Caco-2 (cell line): ENCODE measurements at regions of chr10 and their contacts with region 1.

Region 1: DNA sequence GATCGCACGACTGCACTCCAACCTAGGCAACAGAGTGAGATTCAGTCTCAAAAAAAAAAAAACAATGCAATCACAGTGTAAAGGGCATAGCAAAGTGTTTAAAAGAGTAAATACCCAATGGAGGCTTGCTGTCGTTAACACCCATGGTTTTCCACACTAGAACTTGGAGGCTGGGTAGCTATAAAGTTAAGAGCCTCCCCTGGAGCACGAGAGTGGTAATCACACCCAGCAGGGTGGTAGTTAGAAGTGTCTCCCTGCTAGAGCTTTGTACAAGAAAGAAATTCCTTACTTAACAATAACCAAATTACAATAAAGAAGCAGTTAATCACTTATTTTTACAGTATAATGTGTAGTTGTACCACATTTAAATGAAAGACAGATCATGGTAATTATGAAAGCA is 1078.9 kb downstream of the NRG3 start:
- DNase-seq: no peak
- H3K4me3 ChIP-seq: no peak overlapping the region
- H3K4me3 Mint-ChIP-seq: no peak overlapping the region
- H3K27ac Mint-ChIP-seq: no peak overlapping the region
- H3K4me1 ChIP-seq: peaks cover 2% of the 10 kb centered on the region
- H3K4me1 Mint-ChIP-seq: no peaks in the 10 kb centered on the region
- H3K27me3 ChIP-seq: no peaks in the 10 kb centered on the region
- H3K27me3 Mint-ChIP-seq: no peaks in the 10 kb centered on the region
- CTCF ChIP-seq: no peak

Region 2: DNA sequence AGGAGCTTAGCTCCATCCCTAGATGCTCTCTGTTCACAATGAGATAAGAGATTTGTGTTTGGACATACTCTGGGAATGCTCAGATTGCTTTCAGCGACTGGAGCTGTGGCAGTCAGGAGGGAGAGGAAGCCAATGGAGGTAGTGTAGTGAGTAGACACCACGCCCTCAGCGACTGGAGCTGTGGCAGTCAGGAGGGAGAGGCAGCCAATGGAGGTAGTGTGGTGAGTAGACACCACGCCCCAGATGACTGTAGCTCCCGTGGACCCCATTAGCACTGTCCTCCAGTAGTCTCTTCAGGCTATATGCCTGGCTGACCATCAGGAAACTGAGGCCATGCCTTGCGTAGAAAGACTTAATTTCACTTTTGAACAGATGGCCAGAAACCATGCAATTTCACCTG is 45.2 kb before region 1 on chr10:
- CTCF ChIA-PET with region 1: no interaction called
- POLR2A ChIA-PET with region 1: no interaction called
- intact Hi-C with region 1: no loop called
- DNase-seq: no peak
- H3K4me3 ChIP-seq: no peak overlapping the region
- H3K4me3 Mint-ChIP-seq: no peak overlapping the region
- H3K27ac Mint-ChIP-seq: no peak overlapping the region
- H3K4me1 ChIP-seq: no peaks in the 10 kb centered on the region
- H3K4me1 Mint-ChIP-seq: no peaks in the 10 kb centered on the region
- H3K27me3 ChIP-seq: no peaks in the 10 kb centered on the region
- H3K27me3 Mint-ChIP-seq: no peaks in the 10 kb centered on the region
- CTCF ChIP-seq: no peak

Region 3: GRCh38 chr10:82934429-82934828 is 19.5 kb before region 1 on chr10:
- CTCF ChIA-PET with region 1: no interaction called
- POLR2A ChIA-PET with region 1: no interaction called
- intact Hi-C with region 1: loop called (anchors 1 kb)
- DNase-seq: peak; percentile 53 to 55
- H3K4me3 ChIP-seq: no peak overlapping the region
- H3K4me3 Mint-ChIP-seq: no peak overlapping the region
- H3K27ac Mint-ChIP-seq: no peak overlapping the region
- H3K4me1 ChIP-seq: peaks cover 4% of the 10 kb centered on the region; the same call in 1 of the 2 replicates
- H3K4me1 Mint-ChIP-seq: peaks cover 8% of the 10 kb centered on the region
- H3K27me3 ChIP-seq: no peaks in the 10 kb centered on the region
- H3K27me3 Mint-ChIP-seq: no peaks in the 10 kb centered on the region
- CTCF ChIP-seq: peak; percentile 47 to 59

Region 4: GRCh38 chr10:83212632-83213334 is 258.9 kb after region 1 on chr10:
- CTCF ChIA-PET with region 1: no interaction called
- POLR2A ChIA-PET with region 1: no interaction called
- intact Hi-C with region 1: no loop called
- DNase-seq: no peak
- H3K4me3 ChIP-seq: no peak overlapping the region
- H3K4me3 Mint-ChIP-seq: no peak overlapping the region
- H3K27ac Mint-ChIP-seq: no peak overlapping the region
- H3K4me1 ChIP-seq: no peaks in the 10 kb centered on the region
- H3K4me1 Mint-ChIP-seq: no peaks in the 10 kb centered on the region
- H3K27me3 ChIP-seq: no peaks in the 10 kb centered on the region
- H3K27me3 Mint-ChIP-seq: peaks cover 3% of the 10 kb centered on the region
- CTCF ChIP-seq: no peak